CD8-positive, alpha-beta memory T cell (primary cell): ENCODE measurements at regions of chr5 and their contacts with region 1.

Region 1: GRCh38 chr5:175534070-175534932 is 55.9 kb downstream of the SFXN1 start:
- DNase-seq: peak; percentile 67 to 85 (median 72)
- H3K4me3 ChIP-seq: peak overlapping the region; percentile 58
- H3K4me3 Mint-ChIP-seq: peak overlapping the region in 5 of 7 donors; percentile 32 to 81 (median 50)
- H3K27ac ChIP-seq: no peak overlapping the region
- H3K27ac Mint-ChIP-seq: peak overlapping the region in 3 of 8 donors; percentile 19 to 38 (median 21)
- H3K4me1 ChIP-seq: peaks cover 7% of the 10 kb centered on the region
- H3K4me1 Mint-ChIP-seq: peaks cover 13 to 30% (median 20%) of the 10 kb centered on the region in 3 donors
- H3K27me3 ChIP-seq: no peaks in the 10 kb centered on the region
- H3K27me3 Mint-ChIP-seq: peaks cover 0 to 2% of the 10 kb centered on the region in 2 donors

Region 2: GRCh38 chr5:175261090-175261489 is 273.2 kb before region 1 on chr5:
- CTCF ChIA-PET with region 1: no interaction called
- POLR2A ChIA-PET with region 1: no interaction called
- DNase-seq: no peak
- H3K4me3 ChIP-seq: no peak overlapping the region
- H3K4me3 Mint-ChIP-seq: no peak overlapping the region
- H3K27ac ChIP-seq: no peak overlapping the region
- H3K27ac Mint-ChIP-seq: no peak overlapping the region
- H3K4me1 ChIP-seq: no peaks in the 10 kb centered on the region
- H3K4me1 Mint-ChIP-seq: no peaks in the 10 kb centered on the region
- H3K27me3 ChIP-seq: no peaks in the 10 kb centered on the region
- H3K27me3 Mint-ChIP-seq: peaks cover 15 to 22% of the 10 kb centered on the region in 2 donors

Region 3: GRCh38 chr5:175464074-175464941 is 70.0 kb before region 1 on chr5:
- CTCF ChIA-PET with region 1: interaction called, 16 read pairs
- POLR2A ChIA-PET with region 1: no interaction called
- DNase-seq: peak in 4 of 5 donors; percentile 16 to 66 (median 44)
- H3K4me3 ChIP-seq: no peak overlapping the region
- H3K4me3 Mint-ChIP-seq: peak overlapping the region in 1 of 7 donors; percentile 57
- H3K27ac ChIP-seq: no peak overlapping the region
- H3K27ac Mint-ChIP-seq: peak overlapping the region in 4 of 8 donors; percentile 15 to 94 (median 18)
- H3K4me1 ChIP-seq: peaks cover 5% of the 10 kb centered on the region
- H3K4me1 Mint-ChIP-seq: peaks cover 5 to 10% (median 9%) of the 10 kb centered on the region in 3 donors
- H3K27me3 ChIP-seq: no peaks in the 10 kb centered on the region
- H3K27me3 Mint-ChIP-seq: peaks cover 0 to 6% of the 10 kb centered on the region in 2 donors

Region 4: GRCh38 chr5:175517818-175518450 is 16.4 kb before region 1 on chr5:
- CTCF ChIA-PET with region 1: interaction called, 57 read pairs
- POLR2A ChIA-PET with region 1: no interaction called
- DNase-seq: peak in 2 of 5 donors; percentile 4 to 69
- H3K4me3 ChIP-seq: no peak overlapping the region
- H3K4me3 Mint-ChIP-seq: peak overlapping the region in 5 of 7 donors; percentile 11 to 65 (median 39)
- H3K27ac ChIP-seq: no peak overlapping the region
- H3K27ac Mint-ChIP-seq: peak overlapping the region; percentile 11 to 84 (median 78)
- H3K4me1 ChIP-seq: peaks cover 65% of the 10 kb centered on the region
- H3K4me1 Mint-ChIP-seq: peaks cover 57 to 66% (median 64%) of the 10 kb centered on the region in 3 donors
- H3K27me3 ChIP-seq: no peaks in the 10 kb centered on the region
- H3K27me3 Mint-ChIP-seq: no peaks in the 10 kb centered on the region

Region 5: GRCh38 chr5:175590471-175590881 is 56.2 kb after region 1 on chr5:
- CTCF ChIA-PET with region 1: no interaction called
- POLR2A ChIA-PET with region 1: no interaction called
- DNase-seq: no peak
- H3K4me3 ChIP-seq: no peak overlapping the region
- H3K4me3 Mint-ChIP-seq: no peak overlapping the region
- H3K27ac ChIP-seq: no peak overlapping the region
- H3K27ac Mint-ChIP-seq: no peak overlapping the region
- H3K4me1 ChIP-seq: no peaks in the 10 kb centered on the region
- H3K4me1 Mint-ChIP-seq: no peaks in the 10 kb centered on the region
- H3K27me3 ChIP-seq: no peaks in the 10 kb centered on the region
- H3K27me3 Mint-ChIP-seq: peaks cover 9 to 34% of the 10 kb centered on the region in 2 donors

Region 6: GRCh38 chr5:175696139-175696854 is 162.0 kb after region 1 on chr5:
- CTCF ChIA-PET with region 1: interaction called, 41 read pairs
- POLR2A ChIA-PET with region 1: no interaction called
- DNase-seq: peak; percentile 29 to 67 (median 41)
- H3K4me3 ChIP-seq: no peak overlapping the region
- H3K4me3 Mint-ChIP-seq: peak overlapping the region in 6 of 7 donors; percentile 36 to 68 (median 64)
- H3K27ac ChIP-seq: no peak overlapping the region
- H3K27ac Mint-ChIP-seq: peak overlapping the region in 6 of 8 donors; percentile 26 to 81 (median 56)
- H3K4me1 ChIP-seq: peaks cover 15% of the 10 kb centered on the region
- H3K4me1 Mint-ChIP-seq: peaks cover 13 to 25% (median 20%) of the 10 kb centered on the region in 3 donors
- H3K27me3 ChIP-seq: no peaks in the 10 kb centered on the region
- H3K27me3 Mint-ChIP-seq: peaks cover 0 to 7% of the 10 kb centered on the region in 2 donors

Region 7: GRCh38 chr5:175718401-175719108 is 184.3 kb after region 1 on chr5:
- CTCF ChIA-PET with region 1: interaction called, 27 read pairs
- POLR2A ChIA-PET with region 1: interaction called, 3 read pairs
- DNase-seq: peak in 3 of 5 donors; percentile 10 to 34 (median 18)
- H3K4me3 ChIP-seq: no peak overlapping the region
- H3K4me3 Mint-ChIP-seq: no peak overlapping the region
- H3K27ac ChIP-seq: no peak overlapping the region
- H3K27ac Mint-ChIP-seq: no peak overlapping the region
- H3K4me1 ChIP-seq: no peaks in the 10 kb centered on the region
- H3K4me1 Mint-ChIP-seq: no peaks in the 10 kb centered on the region
- H3K27me3 ChIP-seq: no peaks in the 10 kb centered on the region
- H3K27me3 Mint-ChIP-seq: peaks cover 8 to 25% of the 10 kb centered on the region in 2 donors

Region 8: DNA sequence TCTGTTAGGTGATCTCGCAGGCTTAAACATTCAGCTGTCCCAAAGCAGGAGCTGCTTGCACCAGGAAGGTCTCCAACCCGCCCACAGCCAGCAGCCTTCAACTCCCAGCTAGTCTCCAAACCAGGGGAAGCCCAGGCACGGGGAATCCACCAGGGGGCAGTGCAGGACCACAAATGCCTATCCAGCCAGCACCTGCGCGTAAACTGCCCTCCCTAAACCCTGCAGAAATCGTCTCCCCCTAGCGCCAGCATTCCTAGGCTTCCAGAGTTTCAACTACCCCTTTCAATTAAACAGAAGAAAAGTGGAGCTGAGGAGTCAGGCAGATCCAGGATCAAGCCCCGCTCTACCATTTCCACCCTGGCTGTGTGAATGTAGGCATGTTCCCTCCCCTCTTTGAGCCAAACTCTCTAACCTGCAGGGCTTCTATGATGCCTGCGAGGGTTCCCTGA is 195.6 kb after region 1 on chr5:
- CTCF ChIA-PET with region 1: interaction called, 17 read pairs
- POLR2A ChIA-PET with region 1: no interaction called
- DNase-seq: peak; percentile 77 to 90 (median 85)
- H3K4me3 ChIP-seq: no peak overlapping the region
- H3K4me3 Mint-ChIP-seq: peak overlapping the region in 1 of 7 donors; percentile 63
- H3K27ac ChIP-seq: no peak overlapping the region
- H3K27ac Mint-ChIP-seq: peak overlapping the region in 1 of 8 donors; percentile 14
- H3K4me1 ChIP-seq: peaks cover 7% of the 10 kb centered on the region
- H3K4me1 Mint-ChIP-seq: peaks cover 7 to 8% (median 8%) of the 10 kb centered on the region in 3 donors
- H3K27me3 ChIP-seq: peaks cover 9% of the 10 kb centered on the region
- H3K27me3 Mint-ChIP-seq: peaks cover 24 to 45% of the 10 kb centered on the region in 2 donors